CD4-positive, alpha-beta T cell (primary cell): ENCODE measurements at regions of chr22 and their contacts with region 1.

Region 1: GRCh38 chr22:30968924-30969539 is at the start of gene TUG1:
- DNase-seq: peak; percentile 95 to 99 (median 97)
- ATAC-seq: peak; percentile 93
- H3K4me3 ChIP-seq: peak within 1 kb of the TSS; percentile 80
- H3K4me3 Mint-ChIP-seq: peak within 1 kb of the TSS; percentile 97
- H3K27ac ChIP-seq: peak within 1 kb of the TSS; percentile 80 to 91
- H3K27ac Mint-ChIP-seq: peak within 1 kb of the TSS; percentile 98
- H3K4me1 ChIP-seq: peaks cover 23% of the 10 kb centered on the region
- H3K4me1 Mint-ChIP-seq: peaks cover 63% of the 10 kb centered on the region
- H3K27me3 ChIP-seq: no peaks in the 10 kb centered on the region
- H3K27me3 Mint-ChIP-seq: no peaks in the 10 kb centered on the region
- CTCF ChIP-seq: no peak
- total RNA-seq, gene TUG1: 85.8 to 86.2 TPM

Region 2: GRCh38 chr22:30634471-30635233 is 334.4 kb before region 1 on chr22:
- CTCF ChIA-PET with region 1: no interaction called
- POLR2A ChIA-PET with region 1: interaction called, 4 read pairs
- intact Hi-C with region 1: loop called in 1 of 2 experiments (anchors 5 kb)
- DNase-seq: peak; percentile 80 to 95 (median 89)
- ATAC-seq: peak; percentile 68
- H3K4me3 ChIP-seq: peak overlapping the region; percentile 68
- H3K4me3 Mint-ChIP-seq: peak overlapping the region; percentile 89
- H3K27ac ChIP-seq: peak overlapping the region; percentile 73 to 76
- H3K27ac Mint-ChIP-seq: peak overlapping the region; percentile 94
- H3K4me1 ChIP-seq: peaks cover 36% of the 10 kb centered on the region
- H3K4me1 Mint-ChIP-seq: peaks cover 28% of the 10 kb centered on the region
- H3K27me3 ChIP-seq: no peaks in the 10 kb centered on the region
- H3K27me3 Mint-ChIP-seq: no peaks in the 10 kb centered on the region
- CTCF ChIP-seq: peak; percentile 91

Region 3: GRCh38 chr22:30822216-30823014 is 146.6 kb before region 1 on chr22:
- CTCF ChIA-PET with region 1: no interaction called
- POLR2A ChIA-PET with region 1: no interaction called
- intact Hi-C with region 1: no loop called
- DNase-seq: no peak
- ATAC-seq: peak; percentile 21
- H3K4me3 ChIP-seq: no peak overlapping the region
- H3K4me3 Mint-ChIP-seq: no peak overlapping the region
- H3K27ac ChIP-seq: no peak overlapping the region
- H3K27ac Mint-ChIP-seq: no peak overlapping the region
- H3K4me1 ChIP-seq: peaks cover 11% of the 10 kb centered on the region
- H3K4me1 Mint-ChIP-seq: peaks cover 13% of the 10 kb centered on the region
- H3K27me3 ChIP-seq: peaks cover 35 to 49% of the 10 kb centered on the region in 2 experiments
- H3K27me3 Mint-ChIP-seq: peaks cover 74% of the 10 kb centered on the region
- CTCF ChIP-seq: no peak

Region 4: GRCh38 chr22:30947816-30948454 is 21.1 kb before region 1 on chr22:
- CTCF ChIA-PET with region 1: interaction called, 3 read pairs
- POLR2A ChIA-PET with region 1: interaction called, 104 read pairs
- intact Hi-C with region 1: loop called in 1 of 2 experiments (anchors 2 kb)
- DNase-seq: peak in 3 of 14 experiments; percentile 60 to 66 (median 65)
- ATAC-seq: peak; percentile 49
- H3K4me3 ChIP-seq: no peak overlapping the region
- H3K4me3 Mint-ChIP-seq: no peak overlapping the region
- H3K27ac ChIP-seq: no peak overlapping the region
- H3K27ac Mint-ChIP-seq: no peak overlapping the region
- H3K4me1 ChIP-seq: peaks cover 39% of the 10 kb centered on the region
- H3K4me1 Mint-ChIP-seq: peaks cover 65% of the 10 kb centered on the region
- H3K27me3 ChIP-seq: no peaks in the 10 kb centered on the region
- H3K27me3 Mint-ChIP-seq: no peaks in the 10 kb centered on the region
- CTCF ChIP-seq: peak; percentile 67

Region 5: DNA sequence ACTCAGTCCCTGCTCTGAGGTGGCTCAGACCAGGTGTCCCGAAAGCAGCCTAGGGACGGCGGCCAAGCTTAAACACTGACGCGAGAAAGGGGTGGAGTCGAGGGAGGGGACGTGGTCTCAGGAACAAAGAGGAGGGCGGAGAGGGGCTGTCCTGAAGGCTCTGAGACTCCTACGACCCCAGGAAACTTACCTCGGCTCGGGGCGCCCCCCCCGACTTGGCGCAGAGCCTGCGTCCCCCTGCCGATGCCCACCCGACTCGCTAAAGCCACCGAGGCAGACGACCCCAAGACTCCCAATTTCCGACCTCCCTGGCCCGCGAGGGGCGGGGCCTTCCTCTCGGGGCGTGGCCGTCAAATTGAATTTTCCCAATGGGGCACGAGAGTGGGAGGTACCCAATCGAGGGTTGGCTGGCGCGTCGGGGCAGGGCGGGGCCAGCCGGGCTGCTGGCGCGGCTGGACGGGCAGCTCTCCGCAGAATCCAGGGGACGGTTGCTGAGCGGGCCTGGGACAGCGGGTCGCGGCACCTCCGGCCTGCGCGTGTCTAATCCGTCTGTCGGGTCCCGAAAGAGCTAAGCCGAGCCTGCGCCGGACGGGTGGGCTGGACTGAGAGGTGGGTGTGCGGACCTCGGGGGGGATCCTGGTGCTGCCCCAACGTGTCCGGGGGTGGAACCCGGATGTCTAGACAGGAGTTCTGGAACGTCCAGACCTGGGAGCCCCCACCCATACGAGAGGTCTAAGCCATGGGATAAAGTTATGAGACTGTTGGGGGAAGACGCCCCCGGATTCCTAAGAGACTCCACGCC is 112.0 kb after region 1 on chr22 and contains the start of gene SMTN:
- CTCF ChIA-PET with region 1: interaction called, 18 read pairs
- POLR2A ChIA-PET with region 1: interaction called, 13 read pairs
- intact Hi-C with region 1: no loop called
- DNase-seq: peak; percentile 74 to 94 (median 85)
- ATAC-seq: peak; percentile 69
- H3K4me3 ChIP-seq: peak within 1 kb of the TSS; percentile 72
- H3K4me3 Mint-ChIP-seq: peak within 1 kb of the TSS; percentile 90
- H3K27ac ChIP-seq: no peak within 1 kb of the TSS
- H3K27ac Mint-ChIP-seq: no peak within 1 kb of the TSS
- H3K4me1 ChIP-seq: peaks cover 53% of the 10 kb centered on the region
- H3K4me1 Mint-ChIP-seq: peaks cover 33% of the 10 kb centered on the region
- H3K27me3 ChIP-seq: no peaks in the 10 kb centered on the region
- H3K27me3 Mint-ChIP-seq: no peaks in the 10 kb centered on the region
- CTCF ChIP-seq: no peak
- total RNA-seq, gene SMTN: 2.9 TPM

Region 6: DNA sequence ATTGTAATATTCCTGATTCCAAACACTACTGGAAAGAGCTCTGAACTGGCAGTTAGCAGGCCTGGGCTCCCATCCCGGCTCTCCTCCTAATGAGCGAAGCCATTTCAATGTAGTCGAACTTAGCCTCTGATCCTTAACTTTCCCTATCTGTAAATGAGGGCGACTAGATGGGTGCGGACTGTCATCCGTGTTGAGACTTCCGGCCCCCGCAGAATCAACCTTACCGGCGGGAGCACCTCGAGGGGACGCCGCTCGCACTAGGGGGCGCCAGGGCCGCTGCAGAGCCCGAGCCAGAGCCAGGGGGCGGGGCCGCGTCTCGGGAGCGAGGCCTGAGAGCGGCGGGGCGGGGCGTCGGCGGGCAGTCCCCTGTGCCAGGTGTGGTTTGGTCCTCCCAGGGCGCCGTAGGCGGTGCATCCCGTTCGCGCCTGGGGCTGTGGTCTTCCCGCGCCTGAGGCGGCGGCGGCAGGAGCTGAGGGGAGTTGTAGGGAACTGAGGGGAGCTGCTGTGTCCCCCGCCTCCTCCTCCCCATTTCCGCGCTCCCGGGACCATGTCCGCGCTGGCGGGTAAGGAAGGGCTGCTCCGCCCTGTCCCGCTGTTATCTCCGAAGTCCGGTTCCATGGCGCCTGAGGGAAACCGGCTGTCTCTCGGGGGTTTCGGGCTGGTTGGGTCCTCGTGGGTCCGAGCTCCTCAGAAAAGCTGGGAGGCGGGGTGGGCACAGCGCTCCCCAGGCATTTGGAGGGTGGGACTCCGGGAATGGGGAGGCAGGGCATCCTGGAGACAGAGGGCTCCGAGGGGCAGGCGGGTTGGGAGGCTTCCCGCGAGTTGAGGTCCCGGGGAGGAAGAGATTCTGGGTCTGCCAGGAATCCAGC is 243.1 kb after region 1 on chr22 and contains the start of gene LIMK2:
- CTCF ChIA-PET with region 1: no interaction called
- POLR2A ChIA-PET with region 1: interaction called, 15 read pairs
- intact Hi-C with region 1: no loop called
- DNase-seq: peak; percentile 92 to 99 (median 97)
- ATAC-seq: peak; percentile 99
- H3K4me3 ChIP-seq: peak within 1 kb of the TSS; percentile 100
- H3K4me3 Mint-ChIP-seq: peak within 1 kb of the TSS; percentile 94
- H3K27ac ChIP-seq: peak within 1 kb of the TSS; percentile 55 to 72
- H3K27ac Mint-ChIP-seq: peak within 1 kb of the TSS; percentile 75
- H3K4me1 ChIP-seq: peaks cover 45% of the 10 kb centered on the region
- H3K4me1 Mint-ChIP-seq: peaks cover 62% of the 10 kb centered on the region
- H3K27me3 ChIP-seq: no peaks in the 10 kb centered on the region
- H3K27me3 Mint-ChIP-seq: no peaks in the 10 kb centered on the region
- CTCF ChIP-seq: peak; percentile 82
- total RNA-seq, gene LIMK2: 13.1 to 14.6 TPM

Region 7: DNA sequence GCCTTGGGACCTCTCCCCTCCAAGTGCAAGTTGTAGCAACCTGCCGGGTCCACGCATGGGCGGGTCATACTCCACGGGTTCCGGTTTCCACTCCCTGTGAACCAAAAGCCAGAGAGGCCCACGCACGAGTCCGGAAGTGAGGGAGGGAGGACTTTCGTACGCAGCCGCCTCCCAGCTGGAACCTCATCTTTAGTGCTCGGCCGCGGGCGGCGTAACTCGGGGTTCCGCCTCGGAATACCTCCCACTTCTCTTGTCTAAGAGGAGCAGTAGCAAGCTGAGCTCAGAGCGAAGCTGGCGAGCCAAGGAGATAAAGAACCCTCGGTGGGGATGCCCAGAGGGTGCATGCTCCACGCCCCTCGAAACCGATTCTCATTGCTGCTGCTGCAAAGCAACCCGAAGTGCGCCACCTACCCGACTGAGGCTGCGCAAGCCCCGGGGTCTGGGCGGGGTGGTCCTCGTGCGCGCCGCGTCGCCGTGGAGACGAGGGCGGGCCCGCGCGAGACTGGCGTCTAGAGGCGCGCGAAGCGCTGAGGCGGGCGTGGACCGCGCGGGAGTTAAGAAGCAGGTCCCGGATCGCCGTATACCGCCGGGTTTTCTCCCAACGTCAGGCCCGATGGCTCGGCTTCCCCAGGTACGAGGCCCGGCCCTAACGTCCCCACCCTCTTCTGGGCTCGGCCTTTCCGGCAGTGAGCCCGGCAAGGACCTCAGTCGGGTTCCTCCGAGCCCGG is 527.1 kb after region 1 on chr22 and contains the start of gene SFI1:
- CTCF ChIA-PET with region 1: no interaction called
- POLR2A ChIA-PET with region 1: no interaction called
- intact Hi-C with region 1: loop called in 1 of 2 experiments (anchors 10 kb)
- DNase-seq: peak; percentile 93 to 98 (median 96)
- ATAC-seq: peak; percentile 78
- H3K4me3 ChIP-seq: peak within 1 kb of the TSS; percentile 100
- H3K4me3 Mint-ChIP-seq: peak within 1 kb of the TSS; percentile 82
- H3K27ac ChIP-seq: peak within 1 kb of the TSS; percentile 94 to 97
- H3K27ac Mint-ChIP-seq: peak within 1 kb of the TSS; percentile 97
- H3K4me1 ChIP-seq: peaks cover 64% of the 10 kb centered on the region
- H3K4me1 Mint-ChIP-seq: peaks cover 57% of the 10 kb centered on the region
- H3K27me3 ChIP-seq: no peaks in the 10 kb centered on the region
- H3K27me3 Mint-ChIP-seq: no peaks in the 10 kb centered on the region
- CTCF ChIP-seq: peak; percentile 37
- total RNA-seq, gene SFI1: 281 to 291 TPM